ENCODE measurements at regions of chr1 and their contacts with region 1.

Region 1: DNA sequence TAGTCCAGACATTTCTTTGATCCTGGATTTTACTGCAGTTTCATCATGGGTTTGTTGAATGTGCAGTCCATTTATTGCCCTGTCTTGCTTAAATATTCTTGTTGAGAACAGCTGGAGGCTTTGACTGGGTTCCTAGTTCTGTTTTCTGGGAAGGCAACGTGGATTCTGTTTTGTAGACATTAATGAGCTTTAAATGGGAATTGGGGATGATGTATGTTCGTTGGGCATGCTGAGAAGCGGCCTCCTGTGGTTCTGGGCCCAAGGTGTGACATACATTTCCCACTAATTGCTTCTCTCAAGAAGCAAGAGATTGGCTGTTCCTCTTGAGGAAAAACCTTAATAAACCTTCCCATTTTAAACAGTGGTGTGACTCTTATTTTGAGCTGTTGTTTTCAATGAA is 22.9 kb downstream of the INKA2 start:
- DNase-seq: no peak
- H3K4me3 ChIP-seq: no peak overlapping the region
- H3K27ac ChIP-seq: no peak overlapping the region
- H3K27me3 ChIP-seq: no peaks in the 10 kb centered on the region
- CTCF ChIP-seq: no peak

Region 2: DNA sequence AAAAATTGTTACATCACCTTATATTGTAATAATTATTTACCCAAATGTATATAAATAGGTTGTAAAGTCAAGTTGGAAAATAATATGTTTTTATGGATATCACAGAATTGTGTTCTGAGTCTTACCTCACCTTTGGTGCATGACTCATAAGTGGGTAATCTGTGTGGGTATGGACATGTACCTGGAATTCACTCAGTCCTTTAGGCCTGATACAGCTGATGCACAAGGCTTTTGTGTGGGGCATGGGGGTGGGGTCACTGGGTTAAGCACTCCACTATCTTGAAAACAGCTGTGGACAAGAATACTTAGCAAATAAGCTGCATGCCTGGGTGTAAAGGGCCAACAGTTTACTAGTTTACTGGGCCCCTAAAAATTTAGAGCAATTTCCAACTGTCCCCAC is 11.6 kb before region 1 on chr1:
- CTCF ChIA-PET with region 1: interaction called, 63 read pairs
- POLR2A ChIA-PET with region 1: no interaction called
- DNase-seq: no peak
- H3K4me3 ChIP-seq: no peak overlapping the region
- H3K27ac ChIP-seq: no peak overlapping the region
- H3K27me3 ChIP-seq: no peaks in the 10 kb centered on the region
- CTCF ChIP-seq: no peak

Region 3: GRCh38 chr1:111739194-111739924 is 23.0 kb after region 1 on chr1 and contains the start of gene INKA2:
- CTCF ChIA-PET with region 1: interaction called, 105 read pairs
- POLR2A ChIA-PET with region 1: interaction called, 5 read pairs
- DNase-seq: no peak
- H3K4me3 ChIP-seq: peak within 1 kb of the TSS; percentile 71
- H3K27ac ChIP-seq: peak within 1 kb of the TSS; percentile 61
- H3K27me3 ChIP-seq: no peaks in the 10 kb centered on the region
- CTCF ChIP-seq: no peak
- polyA plus RNA-seq, gene INKA2: 2.3 and 2.7 TPM in 2 replicates

Region 4: DNA sequence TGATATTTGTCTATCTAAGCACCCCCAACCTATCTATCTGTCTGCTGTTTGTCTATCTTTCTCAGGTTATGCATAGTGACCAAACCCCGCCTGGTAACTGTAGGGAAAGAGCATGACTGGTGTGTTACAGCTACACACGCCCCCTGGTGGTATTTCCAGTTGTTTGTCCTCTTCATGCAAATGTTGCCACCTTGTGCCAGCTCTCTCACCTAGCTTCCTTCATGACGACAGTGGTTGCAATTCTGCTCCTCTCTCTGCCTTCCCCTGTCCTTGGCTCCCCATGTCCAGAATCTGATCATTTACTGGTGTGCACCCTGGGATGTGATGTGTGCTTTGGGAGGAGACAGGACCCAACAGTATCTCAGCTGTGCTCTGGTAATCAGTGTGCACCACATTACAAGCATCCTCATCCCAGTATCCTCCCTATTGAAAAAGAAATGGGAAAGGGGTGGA is 31.0 kb after region 1 on chr1:
- CTCF ChIA-PET with region 1: interaction called, 105 read pairs
- POLR2A ChIA-PET with region 1: interaction called, 8 read pairs
- DNase-seq: no peak
- H3K4me3 ChIP-seq: no peak overlapping the region
- H3K27ac ChIP-seq: no peak overlapping the region
- H3K27me3 ChIP-seq: no peaks in the 10 kb centered on the region
- CTCF ChIP-seq: peak; percentile 74

Region 5: GRCh38 chr1:111755331-111756123 is 39.2 kb after region 1 on chr1 and contains the start of gene DDX20:
- CTCF ChIA-PET with region 1: interaction called, 105 read pairs
- POLR2A ChIA-PET with region 1: no interaction called
- DNase-seq: peak; percentile 95
- H3K4me3 ChIP-seq: peak within 1 kb of the TSS; percentile 92
- H3K27ac ChIP-seq: peak within 1 kb of the TSS; percentile 96
- H3K27me3 ChIP-seq: no peaks in the 10 kb centered on the region
- CTCF ChIP-seq: peak; percentile 84
- polyA plus RNA-seq, gene DDX20: 8.2 and 12.3 TPM in 2 replicates

Region 6: DNA sequence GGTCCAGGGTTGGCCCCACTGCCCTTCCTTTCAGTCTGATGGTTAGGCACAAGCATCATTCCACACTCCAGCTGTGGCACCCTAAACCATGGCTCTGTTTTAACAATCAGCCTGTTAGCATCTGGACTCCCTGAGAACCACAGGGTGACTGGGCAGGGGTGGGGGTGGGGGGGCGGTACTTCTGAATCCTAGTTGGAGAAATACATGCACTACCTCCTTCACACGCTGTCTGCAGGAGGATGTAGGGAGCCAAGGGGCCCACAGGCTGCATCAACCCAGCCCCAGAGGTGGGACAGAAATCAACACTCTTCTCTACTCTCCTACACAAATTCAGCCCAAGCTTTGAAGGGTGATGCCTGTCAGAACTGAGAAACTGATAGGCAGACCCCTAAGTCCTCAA is 63.2 kb after region 1 on chr1:
- CTCF ChIA-PET with region 1: no interaction called
- POLR2A ChIA-PET with region 1: no interaction called
- DNase-seq: no peak
- H3K4me3 ChIP-seq: no peak overlapping the region
- H3K27ac ChIP-seq: no peak overlapping the region
- H3K27me3 ChIP-seq: peaks cover 2% of the 10 kb centered on the region
- CTCF ChIP-seq: no peak

Region 7: DNA sequence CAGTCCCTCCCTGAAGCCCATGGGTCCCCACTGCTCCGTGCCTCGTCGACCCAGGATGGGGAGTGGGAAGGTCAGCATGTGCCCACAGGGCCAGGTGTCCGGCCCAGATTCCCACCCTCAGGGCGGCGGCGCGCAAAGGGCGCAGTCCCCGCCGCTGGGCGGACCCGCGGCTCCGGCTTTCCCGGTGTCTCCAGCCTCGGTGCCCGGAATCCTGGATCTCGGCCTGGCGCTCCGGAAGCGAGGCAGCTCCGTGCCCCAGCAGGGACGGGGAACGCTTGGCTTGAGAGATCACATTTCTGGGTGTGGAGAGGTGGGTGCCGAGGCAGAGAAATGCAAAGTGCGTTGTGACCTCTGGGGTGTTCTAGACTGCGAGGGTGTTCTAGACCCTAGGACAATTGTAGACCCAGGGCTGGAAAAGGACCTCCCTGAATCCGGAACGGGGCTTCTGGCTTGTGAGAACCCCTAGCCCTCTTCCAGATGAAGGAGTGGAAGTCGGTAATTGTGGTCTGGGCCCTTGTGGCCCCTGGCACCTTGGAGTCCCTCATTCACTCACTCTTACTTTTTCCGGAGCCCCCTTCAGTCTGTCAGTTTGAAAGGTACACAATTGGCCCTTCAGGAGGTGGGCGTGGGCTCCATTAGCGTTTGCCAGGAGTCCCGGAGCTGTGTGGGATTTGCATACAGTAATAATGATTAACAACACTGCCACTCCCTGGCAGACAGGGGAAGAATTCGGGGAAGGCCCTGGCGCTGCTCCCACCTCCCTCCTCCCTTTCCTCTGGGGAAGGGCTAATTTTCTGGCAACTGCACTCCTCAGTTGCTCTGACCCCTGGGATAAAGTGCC is 274.8 kb after region 1 on chr1:
- CTCF ChIA-PET with region 1: no interaction called
- POLR2A ChIA-PET with region 1: no interaction called
- DNase-seq: no peak
- H3K4me3 ChIP-seq: no peak overlapping the region
- H3K27ac ChIP-seq: no peak overlapping the region
- H3K27me3 ChIP-seq: peaks cover 61% of the 10 kb centered on the region
- CTCF ChIP-seq: no peak